A549 (cell line): ENCODE measurements at regions of chr12 and their contacts with region 1.

Region 1: GRCh38 chr12:52278541-52279421 is 4.3 kb downstream of the KRT86 start:
- DNase-seq: peak; percentile 87 to 92
- ATAC-seq: peak; percentile 31 to 49
- H3K4me3 ChIP-seq: peak overlapping the region; percentile 33; the same call in 2 of the 3 replicates
- H3K27ac ChIP-seq: peak overlapping the region; percentile 96 to 100
- H3K4me1 ChIP-seq: peaks cover 67% of the 10 kb centered on the region
- CTCF ChIP-seq: peak; percentile 96
- EP300 ChIP-seq: no peak
- POLR2A ChIP-seq: no peak
- RAD21 ChIP-seq: peak; percentile 85 to 89

Region 2: GRCh38 chr12:51994959-51995358 is 283.8 kb before region 1 on chr12:
- CTCF ChIA-PET with region 1: no interaction called
- POLR2A ChIA-PET with region 1: no interaction called
- DNase-seq: no peak
- ATAC-seq: no peak
- H3K4me3 ChIP-seq: no peak overlapping the region
- H3K27ac ChIP-seq: no peak overlapping the region
- H3K4me1 ChIP-seq: peaks cover 4% of the 10 kb centered on the region; the same call in 2 of the 3 replicates
- CTCF ChIP-seq: no peak
- EP300 ChIP-seq: no peak
- POLR2A ChIP-seq: no peak
- RAD21 ChIP-seq: no peak

Region 3: DNA sequence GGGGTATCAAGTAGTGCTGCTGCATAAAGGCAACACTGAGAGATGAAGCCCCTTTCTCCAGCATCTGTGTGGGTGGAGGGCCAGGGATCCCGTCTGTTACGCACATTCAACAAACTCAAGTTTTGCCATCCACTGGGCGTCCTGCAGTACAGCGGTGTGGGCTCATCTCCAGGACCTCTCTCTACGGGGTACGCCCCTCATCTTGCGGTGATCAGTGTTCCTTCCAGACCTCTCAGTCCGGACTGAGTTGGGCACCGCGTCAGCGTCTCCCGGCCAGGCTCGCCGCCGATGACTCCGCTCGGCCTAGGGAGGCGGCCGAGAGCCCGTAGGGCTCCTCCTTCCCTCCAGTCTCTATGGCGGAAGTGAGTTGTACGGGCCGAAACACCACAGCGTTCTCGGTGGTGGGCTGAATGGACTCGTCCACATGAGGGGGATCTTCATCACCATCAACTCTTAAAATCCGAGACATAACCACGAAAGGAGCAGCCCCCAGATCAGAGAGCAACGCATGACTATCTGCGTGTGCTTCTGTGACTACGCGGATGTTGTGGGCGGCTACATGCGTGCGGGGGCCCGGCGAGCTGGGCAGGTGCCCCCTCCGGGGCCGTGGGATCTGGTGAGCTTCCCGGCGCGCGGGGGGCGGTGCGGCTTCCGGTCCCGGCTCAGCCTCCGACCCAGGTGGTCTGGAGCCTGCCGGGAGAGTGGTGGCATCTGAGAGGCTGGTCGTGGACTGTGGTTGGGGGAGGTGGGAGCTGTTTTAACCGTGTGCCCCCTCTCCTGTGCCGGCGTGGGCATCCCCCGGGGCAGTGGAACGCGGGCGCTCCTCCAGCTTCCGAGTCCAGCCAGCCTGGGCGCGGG is 209.2 kb before region 1 on chr12 and contains the start of gene ATG101:
- CTCF ChIA-PET with region 1: no interaction called
- POLR2A ChIA-PET with region 1: no interaction called
- DNase-seq: peak; percentile 98
- ATAC-seq: peak; percentile 93 to 95
- H3K4me3 ChIP-seq: peak within 1 kb of the TSS; percentile 100
- H3K27ac ChIP-seq: peak within 1 kb of the TSS; percentile 98 to 100
- H3K4me1 ChIP-seq: peaks cover 16% of the 10 kb centered on the region
- CTCF ChIP-seq: peak; percentile 54
- EP300 ChIP-seq: no peak
- POLR2A ChIP-seq: peak; percentile 92
- RAD21 ChIP-seq: peak in 1 of 2 experiments; percentile 20; a peak in 3 of 5 replicates
- polyA plus RNA-seq, gene ATG101: 124 and 141 TPM in 2 replicates

Region 4: DNA sequence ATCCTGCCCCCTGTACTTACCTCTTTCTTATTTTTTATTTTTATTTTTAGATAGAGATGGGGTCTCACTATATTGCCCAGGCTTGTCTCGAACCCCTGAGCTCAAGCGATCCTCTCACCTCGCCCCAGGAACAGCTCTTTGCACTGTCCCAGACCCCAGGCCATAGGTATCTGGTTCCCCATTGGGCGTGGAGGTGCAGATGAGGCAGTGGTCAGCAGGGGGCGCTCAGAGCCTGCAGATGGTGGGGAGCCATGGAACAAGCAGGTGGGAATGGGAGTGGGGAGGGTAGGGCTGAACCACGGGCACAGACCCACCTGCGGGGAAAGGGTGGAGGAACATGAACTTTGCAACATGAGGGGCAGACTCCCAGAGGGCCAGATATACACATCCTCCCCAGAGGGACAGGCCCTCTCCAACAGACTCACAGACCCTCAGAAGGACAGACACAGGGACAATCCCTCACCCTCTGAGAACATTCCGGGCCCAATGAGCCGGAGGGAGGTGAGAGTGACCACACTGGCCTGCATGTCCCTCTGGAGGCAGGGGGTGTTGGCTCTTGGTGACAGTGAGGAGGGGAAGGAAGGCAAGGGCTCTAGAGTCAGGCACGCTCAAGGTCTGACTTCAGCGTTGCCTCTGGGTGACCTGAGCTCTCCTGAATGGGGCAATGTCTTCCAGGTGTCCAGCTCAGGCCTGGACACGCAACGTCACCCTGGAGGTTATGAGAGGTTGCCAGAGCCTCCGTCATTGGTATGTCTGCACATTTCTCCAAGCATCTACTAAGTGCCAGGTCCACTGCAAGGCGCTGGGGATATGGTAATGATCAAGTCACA is 121.8 kb before region 1 on chr12:
- CTCF ChIA-PET with region 1: interaction called, 49 read pairs
- POLR2A ChIA-PET with region 1: no interaction called
- DNase-seq: peak; percentile 81 to 88
- ATAC-seq: peak; percentile 72 to 78
- H3K4me3 ChIP-seq: no peak overlapping the region
- H3K27ac ChIP-seq: peak overlapping the region; percentile 100
- H3K4me1 ChIP-seq: peaks cover 63% of the 10 kb centered on the region
- CTCF ChIP-seq: peak; percentile 97
- EP300 ChIP-seq: no peak
- POLR2A ChIP-seq: no peak
- RAD21 ChIP-seq: peak; percentile 99 to 100

Region 5: DNA sequence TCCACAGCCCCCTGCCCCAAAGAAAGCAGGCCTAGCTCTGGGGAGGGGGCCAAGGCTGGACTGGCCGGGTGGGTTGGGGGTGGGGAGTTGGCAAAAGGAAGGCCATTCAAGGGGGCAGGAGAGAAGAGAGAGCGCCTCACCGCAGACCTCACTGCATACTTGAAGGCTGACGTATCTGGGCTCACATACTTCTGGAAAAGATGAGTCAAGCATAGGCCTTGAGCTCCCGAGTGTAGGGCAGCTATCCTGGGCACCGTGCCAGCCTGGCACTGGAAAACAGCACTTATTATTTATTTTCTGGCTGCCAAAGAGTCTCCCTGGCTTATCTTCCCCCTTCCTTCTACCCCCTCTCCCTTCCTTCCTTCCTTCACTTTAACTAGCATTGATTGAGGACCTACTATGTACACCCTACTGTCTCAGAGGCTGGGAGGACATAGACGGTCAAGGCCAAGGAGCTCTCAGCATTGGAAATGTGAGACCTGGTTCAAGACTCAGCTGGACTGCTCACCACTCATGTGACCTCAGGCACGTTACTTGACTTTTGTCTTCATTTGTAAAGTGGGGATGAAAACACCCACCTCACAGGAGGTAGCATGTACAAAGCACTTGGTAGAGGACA is 86.5 kb before region 1 on chr12:
- CTCF ChIA-PET with region 1: no interaction called
- POLR2A ChIA-PET with region 1: interaction called, 22 read pairs
- DNase-seq: peak; percentile 99
- ATAC-seq: peak; percentile 91 to 92
- H3K4me3 ChIP-seq: peak overlapping the region; percentile 64
- H3K27ac ChIP-seq: peak overlapping the region; percentile 96 to 100
- H3K4me1 ChIP-seq: peaks cover 76% of the 10 kb centered on the region
- CTCF ChIP-seq: no peak
- EP300 ChIP-seq: peak; percentile 80 to 86; a peak in 4 of 5 replicates
- POLR2A ChIP-seq: no peak
- RAD21 ChIP-seq: peak in 1 of 2 experiments; percentile 27; a peak in 2 of 5 replicates

Region 6: GRCh38 chr12:52230327-52231291 is 48.2 kb before region 1 on chr12:
- CTCF ChIA-PET with region 1: interaction called, 29 read pairs
- POLR2A ChIA-PET with region 1: interaction called, 54 read pairs
- DNase-seq: peak in 1 of 2 experiments; percentile 76
- ATAC-seq: peak; percentile 30 to 55; a peak in 3 of 6 replicates
- H3K4me3 ChIP-seq: no peak overlapping the region
- H3K27ac ChIP-seq: peak overlapping the region; percentile 97
- H3K4me1 ChIP-seq: peaks cover 48% of the 10 kb centered on the region
- CTCF ChIP-seq: no peak
- EP300 ChIP-seq: peak; percentile 67 to 71; a peak in 2 of 5 replicates
- POLR2A ChIP-seq: no peak
- RAD21 ChIP-seq: 0 out of 5 replicates have a peak, but pooled peaks of 1 of the 2 experiments have one; percentile 14

Region 7: DNA sequence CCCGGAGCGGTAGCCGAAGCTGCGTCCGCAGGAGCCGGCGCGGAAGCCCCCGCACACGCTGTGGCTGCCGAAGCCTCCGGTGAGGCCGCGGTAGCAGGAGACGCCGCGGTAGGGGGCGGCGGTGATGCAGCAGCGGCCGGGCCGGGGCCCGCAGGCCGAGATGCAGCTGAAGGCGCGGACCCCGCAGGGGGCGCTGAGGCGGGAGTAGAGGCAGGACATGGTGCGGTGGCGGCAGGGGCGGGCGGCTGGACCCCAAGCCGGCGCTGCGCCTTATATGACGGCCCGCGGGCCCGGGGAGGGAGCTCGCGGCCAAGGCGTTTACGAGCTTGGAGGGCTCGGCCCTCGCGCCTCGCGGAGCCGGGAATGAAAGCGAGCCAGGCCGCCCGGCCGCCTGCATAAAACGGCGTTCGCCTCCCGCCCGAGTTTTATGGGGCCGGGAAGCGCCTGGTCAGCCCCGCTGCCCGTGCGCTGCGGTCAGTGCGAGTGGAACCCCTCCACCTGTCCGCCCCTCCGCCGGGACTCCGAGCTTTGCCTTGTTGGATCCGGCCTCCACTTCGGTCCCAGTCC is 20.4 kb before region 1 on chr12:
- CTCF ChIA-PET with region 1: interaction called, 321 read pairs
- POLR2A ChIA-PET with region 1: interaction called, 383 read pairs
- DNase-seq: no peak
- ATAC-seq: no peak; a peak in 1 of 6 replicates
- H3K4me3 ChIP-seq: no peak overlapping the region
- H3K27ac ChIP-seq: peak overlapping the region in 1 of 2 experiments; percentile 74; a peak in 3 of 6 replicates
- H3K4me1 ChIP-seq: peaks cover 60% of the 10 kb centered on the region
- CTCF ChIP-seq: no peak
- EP300 ChIP-seq: no peak
- POLR2A ChIP-seq: no peak
- RAD21 ChIP-seq: no peak

Region 8: DNA sequence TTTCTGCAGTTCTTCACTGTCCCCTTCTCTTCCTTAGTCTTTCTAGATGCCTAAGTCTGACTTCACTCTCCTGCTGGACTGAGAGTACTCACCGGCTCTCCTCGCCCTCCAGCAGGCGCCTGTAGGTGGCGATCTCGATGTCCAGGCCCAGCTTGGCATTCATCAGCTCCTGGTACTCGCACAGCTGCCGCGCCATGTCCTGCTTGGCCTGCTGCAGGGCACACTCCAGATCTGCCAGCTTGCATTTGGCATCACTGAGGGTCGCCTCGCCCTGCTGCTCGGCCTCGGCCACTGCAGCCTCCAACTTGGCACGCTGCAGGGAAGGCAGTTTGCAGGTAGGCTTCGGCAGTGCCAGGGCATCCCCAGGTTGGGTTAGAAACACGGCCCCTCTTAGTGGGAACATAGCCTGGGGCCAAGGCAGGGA is 101.5 kb after region 1 on chr12:
- CTCF ChIA-PET with region 1: no interaction called
- POLR2A ChIA-PET with region 1: no interaction called
- DNase-seq: peak; percentile 52 to 66
- ATAC-seq: peak; percentile 65 to 92; a peak in 5 of 6 replicates
- H3K4me3 ChIP-seq: no peak overlapping the region
- H3K27ac ChIP-seq: no peak overlapping the region
- H3K4me1 ChIP-seq: no peaks in the 10 kb centered on the region
- CTCF ChIP-seq: peak; percentile 53
- EP300 ChIP-seq: no peak
- POLR2A ChIP-seq: no peak
- RAD21 ChIP-seq: peak; percentile 52 to 65; a peak in 3 of 5 replicates